WTC11 (cell line): ENCODE measurements at regions of chr12 and their contacts with region 1.

Region 1: DNA sequence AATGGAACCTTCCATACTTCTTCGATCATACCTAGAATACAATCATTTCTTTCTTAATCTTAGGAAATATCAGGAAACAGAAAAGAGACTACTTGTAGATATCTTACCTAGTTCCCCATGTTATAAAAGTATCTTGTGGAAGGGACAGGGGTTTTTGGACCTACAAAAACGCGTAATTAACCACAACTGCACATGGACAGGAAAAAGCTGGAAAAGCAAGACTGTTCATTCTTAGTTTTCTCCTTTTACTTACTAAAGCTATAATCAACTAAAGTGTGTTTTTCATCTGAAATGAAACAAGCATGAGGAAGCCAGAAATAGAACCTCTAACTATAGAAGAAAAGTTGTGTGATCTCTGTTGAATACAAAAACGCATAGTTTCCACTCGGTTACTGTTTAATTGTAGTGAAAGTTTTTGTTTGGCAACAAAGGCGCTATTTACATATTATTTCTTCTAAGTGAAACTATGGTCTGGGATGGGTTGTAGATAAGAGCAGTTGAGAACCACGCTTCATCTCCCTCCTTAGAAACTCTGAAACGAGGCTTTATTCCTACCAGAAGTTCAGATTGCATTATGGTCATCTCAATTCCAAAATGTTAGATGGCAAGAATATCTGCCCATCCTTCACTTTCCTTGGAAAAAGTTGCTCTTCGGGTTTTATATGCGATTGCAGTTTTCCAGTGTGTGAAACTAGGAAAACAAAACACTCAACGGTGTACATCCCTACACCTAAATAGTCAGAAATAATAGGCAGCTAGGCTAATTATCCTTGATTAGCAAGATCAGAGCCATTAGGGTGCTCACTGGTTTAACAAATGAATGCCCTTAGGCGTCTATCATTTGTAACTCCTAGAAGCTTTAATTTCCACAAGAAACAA is 1.1 kb downstream of the BCAT1 start:
- DNase-seq: no peak
- ATAC-seq: no peak
- H3K4me3 Mint-ChIP-seq: peak overlapping the region; percentile 96
- H3K27ac Mint-ChIP-seq: peak overlapping the region; percentile 100
- H3K4me1 Mint-ChIP-seq: peaks cover 70% of the 10 kb centered on the region
- H3K27me3 Mint-ChIP-seq: no peaks in the 10 kb centered on the region
- CTCF ChIP-seq: no peak

Region 2: DNA sequence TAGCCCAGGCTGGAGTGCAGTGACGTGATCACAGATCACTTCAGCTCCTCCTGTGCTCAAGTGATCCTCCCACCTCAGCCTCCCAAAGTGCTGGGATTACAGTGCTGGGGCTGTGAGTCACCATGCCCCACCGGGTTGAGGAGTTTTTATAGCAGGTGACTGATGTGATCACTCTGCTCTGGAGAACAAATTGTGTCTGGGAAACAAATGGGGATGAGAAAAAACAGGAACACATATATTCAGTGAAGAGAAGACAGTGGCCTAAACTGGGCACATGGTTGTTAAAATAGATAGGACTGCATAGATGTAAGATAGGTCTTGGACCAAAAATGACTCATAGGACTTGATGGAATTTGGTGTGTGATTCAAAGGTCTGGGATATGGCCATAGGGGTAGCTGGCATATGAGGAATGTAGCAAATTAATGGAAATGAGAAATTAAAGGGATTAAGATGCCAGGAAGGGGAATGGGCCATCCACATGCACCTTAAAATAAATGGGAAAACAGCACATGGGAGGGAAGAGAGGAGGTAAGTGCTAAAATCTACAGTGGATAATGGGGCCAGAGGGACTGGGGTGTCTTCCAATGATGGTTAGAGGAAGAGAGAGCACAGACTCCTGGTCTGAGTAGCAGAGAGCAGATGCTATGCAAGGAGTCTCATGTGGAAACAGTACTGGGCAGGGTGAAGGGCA is 10.1 kb before region 1 on chr12:
- CTCF ChIA-PET with region 1: no interaction called
- POLR2A ChIA-PET with region 1: interaction called, 14 read pairs
- DNase-seq: no peak
- ATAC-seq: no peak
- H3K4me3 Mint-ChIP-seq: no peak overlapping the region
- H3K27ac Mint-ChIP-seq: no peak overlapping the region
- H3K4me1 Mint-ChIP-seq: peaks cover 41% of the 10 kb centered on the region
- H3K27me3 Mint-ChIP-seq: no peaks in the 10 kb centered on the region
- CTCF ChIP-seq: no peak

Region 3: DNA sequence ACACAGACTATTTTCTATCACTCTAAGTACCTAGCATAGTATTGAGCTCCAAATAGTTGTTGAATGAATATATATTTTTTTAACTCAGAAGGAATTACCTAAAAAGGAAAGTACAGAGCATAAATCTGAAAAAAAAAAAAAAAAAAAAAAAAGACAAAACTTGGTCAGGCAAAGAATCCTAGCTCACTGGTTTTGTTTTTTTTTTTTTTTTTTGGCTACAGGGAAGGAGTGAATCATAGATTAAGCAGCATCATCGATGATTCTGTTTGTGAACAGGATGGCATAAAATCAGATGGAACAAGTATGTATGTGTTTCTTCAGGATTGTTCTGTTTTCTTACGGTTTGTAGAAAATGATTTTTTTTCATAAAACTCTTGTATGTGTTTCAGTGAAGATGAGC is 67.2 kb after region 1 on chr12:
- CTCF ChIA-PET with region 1: no interaction called
- POLR2A ChIA-PET with region 1: no interaction called
- DNase-seq: no peak
- ATAC-seq: no peak
- H3K4me3 Mint-ChIP-seq: no peak overlapping the region
- H3K27ac Mint-ChIP-seq: no peak overlapping the region
- H3K4me1 Mint-ChIP-seq: peaks cover 10% of the 10 kb centered on the region
- H3K27me3 Mint-ChIP-seq: no peaks in the 10 kb centered on the region
- CTCF ChIP-seq: no peak

Region 4: GRCh38 chr12:25458047-25458552 is 510.3 kb after region 1 on chr12:
- CTCF ChIA-PET with region 1: no interaction called
- POLR2A ChIA-PET with region 1: no interaction called
- DNase-seq: no peak
- ATAC-seq: no peak
- H3K4me3 Mint-ChIP-seq: no peak overlapping the region
- H3K27ac Mint-ChIP-seq: no peak overlapping the region
- H3K4me1 Mint-ChIP-seq: no peaks in the 10 kb centered on the region
- H3K27me3 Mint-ChIP-seq: no peaks in the 10 kb centered on the region
- CTCF ChIP-seq: no peak